ENCODE measurements at regions of chr14 and their contacts with region 1.

Region 1: GRCh38 chr14:88613552-88614010 is 50.7 kb downstream of the ZC3H14 start:
- DNase-seq: no peak

Region 2: DNA sequence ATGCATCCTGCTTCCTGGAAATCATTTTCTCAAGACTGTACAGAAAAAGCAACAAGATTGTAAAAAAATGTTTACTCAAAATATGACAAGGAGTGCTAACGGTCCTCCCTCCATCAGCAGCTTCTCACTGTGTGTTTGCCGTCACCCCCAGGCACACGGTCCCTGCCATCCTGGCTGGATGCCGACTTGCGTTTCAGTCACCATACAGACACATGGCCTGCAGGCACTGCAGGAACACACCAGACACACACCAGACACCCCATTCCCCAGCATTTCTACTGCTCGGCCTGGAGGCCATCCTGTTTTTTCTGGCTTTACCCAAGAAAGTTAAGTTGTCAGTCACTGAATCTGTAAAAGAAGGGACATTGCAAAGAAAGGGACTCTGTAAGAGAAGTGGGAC is 301.3 kb before region 1 on chr14:
- intact Hi-C with region 1: no loop called
- DNase-seq: no peak

Region 3: GRCh38 chr14:88430976-88431375 is 182.6 kb before region 1 on chr14:
- intact Hi-C with region 1: no loop called
- DNase-seq: no peak

Region 4: GRCh38 chr14:88572117-88572516 is 41.5 kb before region 1 on chr14:
- intact Hi-C with region 1: loop called in 1 of 2 experiments (anchors 2 kb)
- DNase-seq: no peak

Measured in posterior vena cava (tissue), 2 donors.